ENCODE measurements at regions of chr6 and their contacts with region 1.

Region 1: GRCh38 chr6:3157131-3157927 is at the start of gene TUBB2A:
- DNase-seq: peak; percentile 79 to 94 (median 87)
- ATAC-seq: peak; percentile 62
- H3K4me3 ChIP-seq: peak within 1 kb of the TSS; percentile 75
- H3K4me3 Mint-ChIP-seq: peak within 1 kb of the TSS; percentile 91
- H3K27ac ChIP-seq: peak within 1 kb of the TSS; percentile 52 to 59
- H3K27ac Mint-ChIP-seq: peak within 1 kb of the TSS; percentile 87
- H3K4me1 ChIP-seq: peaks cover 46% of the 10 kb centered on the region
- H3K4me1 Mint-ChIP-seq: peaks cover 41% of the 10 kb centered on the region
- H3K27me3 ChIP-seq: no peaks in the 10 kb centered on the region
- H3K27me3 Mint-ChIP-seq: peaks cover 4% of the 10 kb centered on the region
- CTCF ChIP-seq: peak; percentile 42
- total RNA-seq, gene TUBB2A: 54.3 to 58.5 TPM

Region 2: GRCh38 chr6:3118353-3119039 is 38.8 kb before region 1 on chr6 and contains the start of gene BPHL:
- CTCF ChIA-PET with region 1: interaction called, 3 read pairs
- POLR2A ChIA-PET with region 1: no interaction called
- intact Hi-C with region 1: loop called in 1 of 2 experiments (anchors 5 kb)
- DNase-seq: peak; percentile 98 to 100 (median 99)
- ATAC-seq: peak; percentile 90
- H3K4me3 ChIP-seq: peak within 1 kb of the TSS; percentile 67
- H3K4me3 Mint-ChIP-seq: peak within 1 kb of the TSS; percentile 93
- H3K27ac ChIP-seq: peak within 1 kb of the TSS; percentile 91 to 96
- H3K27ac Mint-ChIP-seq: peak within 1 kb of the TSS; percentile 91
- H3K4me1 ChIP-seq: peaks cover 15% of the 10 kb centered on the region
- H3K4me1 Mint-ChIP-seq: peaks cover 19% of the 10 kb centered on the region
- H3K27me3 ChIP-seq: no peaks in the 10 kb centered on the region
- H3K27me3 Mint-ChIP-seq: no peaks in the 10 kb centered on the region
- CTCF ChIP-seq: no peak
- total RNA-seq, gene BPHL: 5.2 to 5.7 TPM